Activated CD4-positive, alpha-beta T cell treated with anti-CD3 and anti-CD28 coated beads for 36 hours (primary cell): ENCODE measurements at regions of chr5 and their contacts with region 1.

Region 1: GRCh38 chr5:66171349-66172344 is 27.5 kb downstream of the SREK1 start:
- DNase-seq: peak; percentile 61
- ATAC-seq: peak; percentile 56
- H3K4me3 Mint-ChIP-seq: no peak overlapping the region
- H3K27ac Mint-ChIP-seq: no peak overlapping the region
- H3K4me1 Mint-ChIP-seq: peaks cover 28% of the 10 kb centered on the region
- H3K27me3 Mint-ChIP-seq: no peaks in the 10 kb centered on the region

Region 2: DNA sequence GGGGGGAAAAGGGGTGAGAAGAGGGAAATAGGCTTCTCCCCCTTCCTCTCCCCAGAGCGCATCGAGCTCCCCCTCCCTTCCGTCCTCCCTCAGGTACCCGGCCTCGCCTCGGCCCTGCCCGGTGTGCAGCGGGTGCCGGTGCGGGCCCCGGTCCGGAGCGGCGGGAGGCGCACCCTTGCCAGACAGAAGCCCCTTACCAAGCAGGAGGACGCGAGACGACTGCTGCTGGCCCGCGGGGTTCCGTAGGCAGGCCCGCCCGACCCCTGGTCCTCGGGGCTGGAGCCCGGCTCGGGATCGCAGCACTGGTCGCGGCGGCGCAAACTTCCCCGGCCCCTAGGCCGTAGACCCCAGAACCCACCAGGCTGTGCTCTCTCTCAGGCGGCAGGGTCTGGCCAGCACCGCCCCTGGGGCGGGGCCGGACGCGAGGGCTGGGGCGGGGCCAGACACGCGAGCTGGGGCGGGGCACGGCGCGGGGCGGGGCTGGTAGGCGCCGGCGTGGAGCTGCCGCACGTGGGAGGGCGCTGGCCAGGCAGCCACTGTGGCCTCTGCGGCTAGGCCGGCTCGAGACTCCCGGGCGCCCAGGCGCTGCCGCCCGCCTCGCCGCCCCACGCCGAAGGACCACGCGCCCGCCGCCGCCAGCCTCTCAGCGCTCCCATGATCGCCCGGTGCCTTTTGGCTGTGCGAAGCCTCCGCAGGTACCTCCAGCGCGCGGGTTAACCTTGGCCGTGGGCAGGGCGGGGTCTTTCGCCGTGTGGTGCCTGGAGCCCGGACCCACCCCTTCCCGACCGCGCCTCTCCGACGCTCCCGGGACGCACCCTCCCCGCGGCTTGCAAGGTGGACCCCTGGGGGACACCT is 449.7 kb before region 1 on chr5 and contains the starts of genes NLN and SGTB:
- CTCF ChIA-PET with region 1: interaction called, 3 read pairs
- POLR2A ChIA-PET with region 1: no interaction called
- intact Hi-C with region 1: loop called in 1 of 2 experiments (anchors 1 kb)
- DNase-seq: peak; percentile 91
- ATAC-seq: peak; percentile 91
- H3K4me3 Mint-ChIP-seq: peak within 1 kb of the TSS; percentile 94
- H3K27ac Mint-ChIP-seq: peak within 1 kb of the TSS; percentile 93
- H3K4me1 Mint-ChIP-seq: peaks cover 20% of the 10 kb centered on the region
- H3K27me3 Mint-ChIP-seq: no peaks in the 10 kb centered on the region
- total RNA-seq, gene NLN: 30.9 to 33.8 TPM
- total RNA-seq, gene SGTB: 18.0 TPM

Region 3: DNA sequence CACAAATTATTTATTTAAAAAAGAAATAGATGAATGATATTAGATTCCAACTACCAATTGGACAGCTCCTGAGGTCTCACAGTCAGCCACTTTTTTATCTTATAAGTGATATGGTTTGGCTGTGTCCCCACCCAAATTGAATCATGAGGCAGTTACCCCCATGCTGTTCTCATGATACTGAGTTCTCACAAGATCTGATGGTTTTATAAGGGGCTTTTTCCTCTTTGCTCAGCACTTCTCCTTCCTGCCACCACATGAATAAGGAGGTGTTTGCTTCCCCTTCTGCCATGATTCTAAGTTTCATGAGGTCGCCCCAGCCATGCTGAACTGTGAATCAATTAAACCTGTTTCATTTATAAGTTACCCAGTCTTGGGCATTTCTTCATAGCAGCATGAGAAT is 436.7 kb before region 1 on chr5:
- CTCF ChIA-PET with region 1: no interaction called
- POLR2A ChIA-PET with region 1: no interaction called
- intact Hi-C with region 1: loop called (anchors 2 to 5 kb)
- DNase-seq: no peak
- ATAC-seq: no peak
- H3K4me3 Mint-ChIP-seq: no peak overlapping the region
- H3K27ac Mint-ChIP-seq: no peak overlapping the region
- H3K4me1 Mint-ChIP-seq: peaks cover 13% of the 10 kb centered on the region
- H3K27me3 Mint-ChIP-seq: no peaks in the 10 kb centered on the region

Region 4: DNA sequence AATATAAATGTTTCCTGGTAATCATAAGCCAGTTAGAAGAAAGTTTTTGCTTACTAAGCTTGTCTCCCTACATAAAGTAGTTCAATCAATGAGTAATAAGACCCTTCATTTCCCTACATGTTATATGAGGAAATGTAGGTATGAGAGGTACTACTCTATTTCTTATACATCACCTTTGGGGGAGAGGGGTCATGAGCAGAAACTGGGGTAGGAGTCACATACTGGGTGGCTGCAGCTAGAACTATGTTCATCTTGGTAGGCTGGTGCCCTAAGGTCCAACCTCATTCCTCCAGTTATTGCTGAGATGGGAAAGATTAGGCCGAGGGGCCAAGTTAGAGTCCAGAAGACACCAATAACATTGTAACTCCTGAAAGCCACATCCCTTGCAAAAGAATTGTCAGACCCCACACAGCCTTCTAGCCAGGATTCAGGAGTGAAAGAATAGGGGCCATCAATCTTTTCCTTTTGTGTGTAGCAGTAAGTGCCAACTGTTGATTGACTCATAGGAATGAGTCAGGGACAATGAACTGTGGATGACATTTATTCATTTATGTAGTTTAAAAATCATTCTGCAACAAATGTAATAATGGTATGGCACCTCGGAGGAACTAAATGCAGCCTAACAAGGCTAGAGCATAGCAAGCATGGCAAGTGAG is 49.1 kb before region 1 on chr5:
- CTCF ChIA-PET with region 1: no interaction called
- POLR2A ChIA-PET with region 1: no interaction called
- intact Hi-C with region 1: no loop called
- DNase-seq: no peak
- ATAC-seq: peak; percentile 82
- H3K4me3 Mint-ChIP-seq: no peak overlapping the region
- H3K27ac Mint-ChIP-seq: no peak overlapping the region
- H3K4me1 Mint-ChIP-seq: peaks cover 4% of the 10 kb centered on the region
- H3K27me3 Mint-ChIP-seq: no peaks in the 10 kb centered on the region

Region 5: DNA sequence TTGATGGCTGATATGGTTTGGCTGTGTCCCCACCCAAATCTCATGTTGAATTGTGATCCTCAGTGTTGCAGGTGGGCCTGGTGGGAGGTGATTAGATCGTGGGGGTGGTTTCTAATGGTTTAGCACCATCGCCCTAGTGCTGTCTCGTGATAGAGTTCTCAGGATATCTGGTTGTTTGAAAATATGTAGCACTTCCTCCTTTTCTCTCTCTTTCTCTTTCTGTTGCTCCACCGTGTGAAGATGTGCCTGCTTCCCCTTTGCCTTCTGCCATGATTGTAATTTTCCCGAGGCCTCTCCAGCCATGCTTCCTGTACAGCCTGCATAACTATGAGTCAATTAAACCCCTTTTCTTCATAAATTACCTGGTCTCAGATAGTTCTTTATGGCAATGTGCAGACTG is 84.1 kb after region 1 on chr5:
- CTCF ChIA-PET with region 1: no interaction called
- POLR2A ChIA-PET with region 1: no interaction called
- intact Hi-C with region 1: no loop called
- DNase-seq: no peak
- ATAC-seq: no peak
- H3K4me3 Mint-ChIP-seq: no peak overlapping the region
- H3K27ac Mint-ChIP-seq: no peak overlapping the region
- H3K4me1 Mint-ChIP-seq: no peaks in the 10 kb centered on the region
- H3K27me3 Mint-ChIP-seq: no peaks in the 10 kb centered on the region

Region 6: DNA sequence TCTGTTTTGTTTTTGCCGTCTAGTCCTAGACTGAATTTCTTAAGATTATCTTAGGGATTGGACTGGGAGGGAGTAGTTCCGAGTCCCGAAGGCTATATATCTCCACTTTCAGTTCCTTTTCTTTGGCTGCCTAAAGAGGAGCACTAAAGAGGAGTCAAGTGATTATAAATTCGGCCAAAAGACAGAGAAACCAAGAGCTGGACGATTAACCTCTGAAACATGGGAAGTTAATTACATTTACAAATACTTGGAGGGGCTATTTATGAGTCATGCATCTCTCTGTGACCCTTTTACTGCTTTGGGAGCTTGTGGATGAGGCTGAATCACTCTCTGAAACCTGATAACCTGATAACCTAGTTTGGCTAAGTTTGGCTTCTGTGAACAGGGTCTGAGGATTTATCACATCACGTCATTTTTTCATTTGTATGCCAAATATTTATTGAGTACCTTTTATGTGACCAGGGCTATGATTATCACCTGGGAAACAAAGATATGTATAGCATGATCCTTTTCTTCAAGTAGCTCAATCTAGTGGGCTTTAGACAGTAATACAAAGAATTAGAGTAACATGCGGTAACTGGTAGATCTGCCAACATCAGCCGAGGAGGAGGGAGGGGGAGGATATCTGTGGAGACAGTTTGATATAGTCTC is 844.0 kb after region 1 on chr5:
- CTCF ChIA-PET with region 1: no interaction called
- POLR2A ChIA-PET with region 1: no interaction called
- intact Hi-C with region 1: no loop called
- DNase-seq: no peak
- ATAC-seq: no peak
- H3K4me3 Mint-ChIP-seq: no peak overlapping the region
- H3K27ac Mint-ChIP-seq: no peak overlapping the region
- H3K4me1 Mint-ChIP-seq: peaks cover 68% of the 10 kb centered on the region
- H3K27me3 Mint-ChIP-seq: no peaks in the 10 kb centered on the region